Endothelial cell of umbilical vein (primary cell): ENCODE measurements at regions of chr18 and their contacts with region 1.

Region 1: GRCh38 chr18:66560092-66560491 is 43.8 kb downstream of the CDH19 start:
- DNase-seq: peak; percentile 52
- H3K4me3 ChIP-seq: no peak overlapping the region
- H3K27ac ChIP-seq: no peak overlapping the region
- H3K4me1 ChIP-seq: peaks cover 2% of the 10 kb centered on the region
- H3K27me3 ChIP-seq: no peaks in the 10 kb centered on the region
- CTCF ChIP-seq: peak; percentile 23 to 33
- POLR2A ChIP-seq: no peak

Region 2: DNA sequence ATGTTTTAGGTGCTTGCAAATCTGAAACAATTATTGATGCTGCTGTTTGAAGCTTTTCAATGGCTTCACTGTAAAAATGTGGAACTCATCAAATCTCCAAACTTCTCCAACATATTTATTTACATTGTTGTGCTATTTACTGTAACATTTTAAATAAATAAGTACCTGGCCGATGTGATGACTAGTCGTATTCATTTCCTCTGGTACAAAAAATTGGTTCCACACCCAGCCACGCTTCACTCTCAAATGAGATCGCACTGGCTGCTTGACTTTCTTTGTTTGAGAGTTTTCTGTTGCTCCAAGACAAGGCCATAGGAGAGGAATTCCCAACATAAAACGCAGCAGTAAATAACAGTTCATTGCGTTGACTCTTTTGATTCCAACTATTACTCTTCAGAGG is 11.8 kb after region 1 on chr18:
- CTCF ChIA-PET with region 1: interaction called, 13 read pairs
- POLR2A ChIA-PET with region 1: no interaction called
- dilution Hi-C with region 1: no loop called
- intact Hi-C with region 1: no loop called
- DNase-seq: no peak
- H3K4me3 ChIP-seq: no peak overlapping the region
- H3K27ac ChIP-seq: no peak overlapping the region
- H3K4me1 ChIP-seq: no peaks in the 10 kb centered on the region
- H3K27me3 ChIP-seq: no peaks in the 10 kb centered on the region
- CTCF ChIP-seq: no peak
- POLR2A ChIP-seq: no peak

Region 3: DNA sequence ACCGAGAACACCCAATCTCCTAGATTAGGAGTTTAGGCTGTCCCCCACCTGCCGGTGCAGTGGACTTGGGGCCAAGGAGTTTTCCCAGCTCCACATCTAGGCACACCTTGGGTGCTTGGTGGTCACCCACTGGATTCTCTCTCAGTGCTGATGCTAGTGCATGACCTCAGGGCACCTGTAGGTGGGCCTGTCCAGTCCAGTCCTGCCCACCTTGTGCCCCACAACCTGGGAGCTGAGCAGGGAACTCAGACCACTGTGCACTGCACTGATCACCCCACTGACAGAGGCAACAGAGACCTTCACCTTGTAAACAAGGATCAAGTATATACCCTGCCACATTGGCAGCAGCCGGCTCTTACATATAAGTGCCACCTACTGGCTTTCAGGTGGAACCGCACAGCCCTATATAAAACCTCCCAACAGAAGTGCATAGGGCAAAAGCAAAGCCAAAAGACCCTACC is 56.5 kb after region 1 on chr18:
- CTCF ChIA-PET with region 1: interaction called, 31 read pairs
- POLR2A ChIA-PET with region 1: no interaction called
- dilution Hi-C with region 1: no loop called
- intact Hi-C with region 1: loop called (anchors 1 kb)
- DNase-seq: peak; percentile 19
- H3K4me3 ChIP-seq: no peak overlapping the region
- H3K27ac ChIP-seq: no peak overlapping the region
- H3K4me1 ChIP-seq: peaks cover 11% of the 10 kb centered on the region
- H3K27me3 ChIP-seq: no peaks in the 10 kb centered on the region
- CTCF ChIP-seq: peak; percentile 52 to 54
- POLR2A ChIP-seq: no peak

Region 4: GRCh38 chr18:66749030-66749429 is 188.9 kb after region 1 on chr18:
- CTCF ChIA-PET with region 1: interaction called, 20 read pairs
- POLR2A ChIA-PET with region 1: no interaction called
- dilution Hi-C with region 1: no loop called
- intact Hi-C with region 1: loop called (anchors 1 kb)
- DNase-seq: peak; percentile 22
- H3K4me3 ChIP-seq: no peak overlapping the region
- H3K27ac ChIP-seq: no peak overlapping the region
- H3K4me1 ChIP-seq: no peaks in the 10 kb centered on the region
- H3K27me3 ChIP-seq: no peaks in the 10 kb centered on the region
- CTCF ChIP-seq: peak; percentile 3 to 16
- POLR2A ChIP-seq: no peak

Region 5: GRCh38 chr18:67199993-67200617 is 640.0 kb after region 1 on chr18:
- CTCF ChIA-PET with region 1: interaction called, 5 read pairs
- POLR2A ChIA-PET with region 1: no interaction called
- dilution Hi-C with region 1: no loop called
- intact Hi-C with region 1: loop called (anchors 1 kb)
- DNase-seq: peak; percentile 72
- H3K4me3 ChIP-seq: no peak overlapping the region
- H3K27ac ChIP-seq: no peak overlapping the region
- H3K4me1 ChIP-seq: no peaks in the 10 kb centered on the region
- H3K27me3 ChIP-seq: no peaks in the 10 kb centered on the region
- CTCF ChIP-seq: peak; percentile 32 to 34
- POLR2A ChIP-seq: no peak